GM10248 (cell line): ENCODE measurements at regions of chr7 and their contacts with region 1.

Region 1: DNA sequence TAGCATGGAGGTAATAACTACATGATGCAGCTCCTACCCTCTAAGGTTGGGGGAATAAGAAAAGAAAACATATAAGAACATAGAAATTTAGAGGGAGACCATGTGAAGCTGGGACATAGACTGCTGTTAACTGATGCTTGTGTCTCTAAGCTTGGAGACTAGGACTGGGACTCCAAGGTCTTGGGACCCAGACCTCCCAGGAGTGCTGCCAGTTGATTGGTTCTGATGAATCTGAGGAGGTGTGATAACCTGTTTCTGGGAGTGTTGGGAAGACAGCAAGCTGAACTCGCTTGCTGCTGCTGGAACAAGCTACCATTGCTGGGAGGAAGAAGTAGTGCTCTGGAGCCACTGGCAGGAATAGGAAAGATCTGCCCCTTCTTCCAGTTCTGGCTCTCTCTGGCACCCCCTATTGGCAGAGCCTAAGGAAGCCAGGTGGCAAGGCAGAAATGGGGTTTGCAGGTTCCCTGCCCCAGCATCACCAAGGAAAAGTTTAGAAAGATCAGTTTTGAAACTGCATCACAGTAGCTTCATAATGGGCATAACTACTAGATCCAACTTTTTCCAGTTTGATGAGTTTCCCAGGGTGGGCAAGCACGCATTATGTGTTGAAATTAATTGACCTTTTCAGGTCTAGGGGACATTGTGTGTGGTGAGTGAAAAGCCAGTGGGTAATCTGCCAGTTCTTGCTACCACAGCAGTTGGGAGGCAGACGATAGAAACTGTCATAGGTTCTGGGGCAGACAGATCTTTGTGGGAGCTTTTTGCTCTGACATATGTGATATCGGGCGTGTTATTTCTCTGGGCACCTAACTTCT is 140.7 kb downstream of the SND1 start:
- DNase-seq: peak; percentile 22
- CTCF ChIP-seq: peak; percentile 59

Region 2: DNA sequence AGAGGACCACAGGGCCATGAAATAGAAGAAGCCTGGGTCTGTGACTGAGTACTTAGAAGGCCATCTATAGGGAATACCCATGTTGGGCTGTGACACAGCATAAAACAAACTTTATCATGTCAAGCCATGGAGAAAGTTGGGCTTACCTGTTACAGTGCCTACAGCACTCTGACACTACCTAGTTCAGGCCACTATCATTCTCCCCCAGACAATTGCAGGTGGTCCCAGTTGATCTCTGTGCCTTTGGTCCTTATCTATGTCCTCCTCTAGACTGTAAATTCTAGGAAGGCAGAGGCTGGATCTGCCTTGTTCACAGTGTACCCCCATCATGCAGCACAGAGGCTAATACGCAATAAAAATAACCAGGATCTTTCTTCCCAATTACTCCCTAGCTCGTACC is 276.4 kb before region 1 on chr7:
- CTCF ChIA-PET with region 1: no interaction called
- POLR2A ChIA-PET with region 1: no interaction called
- DNase-seq: no peak
- CTCF ChIP-seq: no peak

Region 3: DNA sequence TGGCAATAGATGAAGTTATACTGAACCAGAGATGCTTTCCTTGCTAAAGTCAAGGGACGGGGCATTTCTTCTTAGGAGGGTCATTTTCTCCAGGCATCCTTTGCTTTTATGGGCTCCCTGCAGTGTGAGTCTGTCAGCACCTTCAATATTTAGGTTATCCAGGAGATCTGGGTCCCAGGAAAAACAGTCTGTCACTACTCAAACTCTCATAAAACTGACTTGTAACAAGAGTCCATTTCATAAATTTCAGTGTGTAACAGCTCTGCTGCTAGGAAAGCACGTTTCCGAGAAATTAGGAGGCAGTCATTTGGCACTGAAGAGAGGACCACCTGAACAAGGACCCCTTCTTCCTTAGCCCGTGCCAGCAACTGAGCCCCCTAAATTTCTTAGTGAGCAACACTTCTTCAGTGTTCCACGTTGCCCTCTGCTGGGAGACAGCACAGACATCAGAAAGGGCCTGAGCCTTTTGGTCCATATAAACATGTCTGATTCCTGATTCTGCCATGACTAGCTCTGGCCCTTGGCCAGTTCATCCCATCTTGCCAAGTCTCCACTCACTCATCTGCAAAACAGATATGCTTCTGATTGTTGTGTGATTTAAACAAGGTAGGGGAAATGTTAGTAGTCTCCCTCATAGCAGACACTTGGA is 214.6 kb before region 1 on chr7:
- CTCF ChIA-PET with region 1: no interaction called
- POLR2A ChIA-PET with region 1: no interaction called
- DNase-seq: no peak
- CTCF ChIP-seq: peak; percentile 34

Region 4: GRCh38 chr7:127766831-127767459 is 25.8 kb before region 1 on chr7:
- CTCF ChIA-PET with region 1: interaction called, 16 read pairs
- POLR2A ChIA-PET with region 1: no interaction called
- DNase-seq: no peak
- CTCF ChIP-seq: no peak

Region 5: GRCh38 chr7:127803626-127804025 is 10.9 kb after region 1 on chr7:
- CTCF ChIA-PET with region 1: interaction called, 54 read pairs
- POLR2A ChIA-PET with region 1: no interaction called
- DNase-seq: no peak
- CTCF ChIP-seq: no peak

Region 6: DNA sequence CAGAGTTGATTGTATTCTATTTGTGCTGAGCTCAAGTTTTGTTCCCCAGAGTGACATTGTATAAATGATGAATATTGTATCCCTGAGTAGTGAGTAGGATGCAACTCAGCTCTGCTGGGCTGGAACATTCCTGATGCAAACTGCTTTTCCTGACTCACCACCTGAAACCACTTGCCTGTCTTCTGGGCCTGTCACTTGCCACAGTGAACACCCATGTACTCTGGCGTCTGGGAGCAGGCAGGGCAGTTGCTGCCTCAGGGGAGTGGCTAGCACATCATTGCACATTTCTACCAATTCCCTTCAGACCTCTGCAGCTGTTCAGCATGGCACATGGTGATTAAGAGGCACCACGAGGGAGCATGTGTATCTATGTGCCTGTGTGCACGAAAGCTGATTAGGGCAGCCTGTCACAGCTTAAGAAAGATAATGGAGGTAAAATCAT is 16.5 kb after region 1 on chr7:
- CTCF ChIA-PET with region 1: interaction called, 54 read pairs
- POLR2A ChIA-PET with region 1: no interaction called
- DNase-seq: no peak
- CTCF ChIP-seq: no peak

Region 7: DNA sequence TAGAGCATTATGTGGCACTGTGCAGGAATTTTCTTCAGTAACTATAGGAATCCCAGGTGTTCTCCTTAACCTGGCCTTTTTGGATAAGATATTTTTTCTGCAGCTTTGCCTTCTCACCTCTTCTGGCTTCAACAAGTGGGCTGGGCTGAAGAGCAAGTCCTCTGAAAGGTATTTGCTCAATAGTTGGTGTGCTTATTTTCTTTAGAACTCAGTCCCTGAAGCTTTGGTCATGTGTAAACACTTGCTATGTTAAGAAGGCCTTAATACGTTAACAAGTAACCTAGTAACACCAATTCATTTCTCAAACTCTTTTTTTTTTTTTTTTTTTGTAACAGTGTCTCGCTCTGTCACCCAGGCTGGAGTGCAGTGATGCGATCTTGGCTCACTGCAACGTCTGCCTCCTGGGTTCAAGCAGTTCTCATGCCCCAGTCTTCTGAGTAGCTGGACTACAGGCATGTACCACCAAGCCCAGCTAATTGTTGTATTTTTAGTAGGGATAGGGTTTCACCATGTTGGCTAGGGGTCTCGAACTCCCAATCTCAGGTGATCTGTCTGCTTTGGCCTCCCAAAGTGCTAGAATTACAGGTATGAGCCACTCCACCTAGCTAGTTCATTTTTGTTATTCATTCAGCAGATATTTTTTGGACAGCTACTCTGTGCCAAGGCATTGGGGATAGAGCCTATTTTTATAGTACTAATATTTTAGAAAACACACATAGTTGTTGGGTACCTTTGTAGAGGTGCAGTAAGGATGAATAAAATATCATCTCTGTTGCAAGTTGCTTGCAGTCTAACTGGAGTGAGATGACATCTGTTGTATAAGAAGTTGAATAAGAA is 23.8 kb after region 1 on chr7:
- CTCF ChIA-PET with region 1: interaction called, 19 read pairs
- POLR2A ChIA-PET with region 1: no interaction called
- DNase-seq: no peak
- CTCF ChIP-seq: no peak